ENCODE measurements at regions of chr12 and their contacts with region 1.

Region 1: GRCh38 chr12:48157018-48157888 is at the start of gene ASB8:
- DNase-seq: peak; percentile 99
- ATAC-seq: peak; percentile 97
- total RNA-seq, gene ASB8: 47.9 to 49.0 TPM

Region 2: GRCh38 chr12:48045965-48046518 is 111.2 kb before region 1 on chr12:
- intact Hi-C with region 1: no loop called
- DNase-seq: no peak
- ATAC-seq: no peak

Region 3: GRCh38 chr12:48105862-48106680 is 51.2 kb before region 1 on chr12 and contains the start of gene SENP1:
- intact Hi-C with region 1: loop called in 1 of 2 experiments (anchors 10 kb)
- DNase-seq: peak; percentile 82 to 90
- ATAC-seq: peak; percentile 95
- total RNA-seq, gene SENP1: 12.1 to 14.4 TPM

Region 4: GRCh38 chr12:48216785-48217184 is 59.5 kb after region 1 on chr12:
- intact Hi-C with region 1: no loop called
- DNase-seq: no peak
- ATAC-seq: no peak

Measured in left colon (tissue), 2 donors.